ENCODE measurements at regions of chr9 and their contacts with region 1.

Region 1: GRCh38 chr9:86202338-86202882 is 57.0 kb downstream of the C9orf153 start:
- DNase-seq: peak in 1 of 2 experiments; percentile 10
- H3K4me3 ChIP-seq: no peak overlapping the region
- H3K4me3 Mint-ChIP-seq: no peak overlapping the region
- H3K27ac Mint-ChIP-seq: no peak overlapping the region
- H3K4me1 ChIP-seq: no peaks in the 10 kb centered on the region
- H3K4me1 Mint-ChIP-seq: no peaks in the 10 kb centered on the region
- H3K27me3 ChIP-seq: no peaks in the 10 kb centered on the region
- H3K27me3 Mint-ChIP-seq: peaks cover 4% of the 10 kb centered on the region
- CTCF ChIP-seq: peak; percentile 30 to 36

Region 2: DNA sequence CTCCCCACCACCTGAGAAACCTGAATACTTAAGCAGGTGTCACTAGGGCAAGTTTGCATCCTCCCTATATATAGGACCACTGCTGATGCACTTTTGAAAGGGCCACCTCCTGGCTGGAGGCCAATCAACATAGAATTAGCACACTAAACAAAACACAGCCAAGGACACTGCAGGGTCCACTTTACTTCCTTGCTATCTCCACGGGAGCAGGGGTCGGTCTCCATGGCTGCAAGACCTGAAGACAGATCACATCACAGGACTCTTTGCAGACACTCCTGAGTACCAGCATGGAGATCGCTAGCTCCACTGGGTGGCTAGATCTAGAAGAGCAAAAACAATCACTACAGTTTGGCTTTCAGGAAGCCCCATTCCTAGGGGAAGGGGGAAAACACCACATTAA is 15.3 kb before region 1 on chr9:
- CTCF ChIA-PET with region 1: no interaction called
- POLR2A ChIA-PET with region 1: no interaction called
- intact Hi-C with region 1: no loop called
- DNase-seq: no peak
- H3K4me3 ChIP-seq: no peak overlapping the region
- H3K4me3 Mint-ChIP-seq: no peak overlapping the region
- H3K27ac Mint-ChIP-seq: no peak overlapping the region
- H3K4me1 ChIP-seq: no peaks in the 10 kb centered on the region
- H3K4me1 Mint-ChIP-seq: peaks cover 6% of the 10 kb centered on the region
- H3K27me3 ChIP-seq: no peaks in the 10 kb centered on the region
- H3K27me3 Mint-ChIP-seq: peaks cover 3% of the 10 kb centered on the region
- CTCF ChIP-seq: no peak

Region 3: GRCh38 chr9:86242071-86242470 is 39.7 kb after region 1 on chr9:
- CTCF ChIA-PET with region 1: interaction called, 6 read pairs
- POLR2A ChIA-PET with region 1: no interaction called
- intact Hi-C with region 1: loop called (anchors 5 kb)
- DNase-seq: no peak
- H3K4me3 ChIP-seq: no peak overlapping the region
- H3K4me3 Mint-ChIP-seq: no peak overlapping the region
- H3K27ac Mint-ChIP-seq: no peak overlapping the region
- H3K4me1 ChIP-seq: no peaks in the 10 kb centered on the region
- H3K4me1 Mint-ChIP-seq: peaks cover 5% of the 10 kb centered on the region
- H3K27me3 ChIP-seq: no peaks in the 10 kb centered on the region
- H3K27me3 Mint-ChIP-seq: no peaks in the 10 kb centered on the region
- CTCF ChIP-seq: no peak